AG04450 (cell line): ENCODE measurements at regions of chr18 and their contacts with region 1.

Region 1: GRCh38 chr18:9136315-9137155 is at the start of gene ANKRD12:
- DNase-seq: peak; percentile 94
- H3K4me3 ChIP-seq: peak within 1 kb of the TSS; percentile 80
- H3K27ac ChIP-seq: peak within 1 kb of the TSS; percentile 98
- H3K27me3 ChIP-seq: no peaks in the 10 kb centered on the region
- CTCF ChIP-seq: no peak
- polyA plus RNA-seq, gene ANKRD12: 8.5 and 10.4 TPM in 2 replicates

Region 2: DNA sequence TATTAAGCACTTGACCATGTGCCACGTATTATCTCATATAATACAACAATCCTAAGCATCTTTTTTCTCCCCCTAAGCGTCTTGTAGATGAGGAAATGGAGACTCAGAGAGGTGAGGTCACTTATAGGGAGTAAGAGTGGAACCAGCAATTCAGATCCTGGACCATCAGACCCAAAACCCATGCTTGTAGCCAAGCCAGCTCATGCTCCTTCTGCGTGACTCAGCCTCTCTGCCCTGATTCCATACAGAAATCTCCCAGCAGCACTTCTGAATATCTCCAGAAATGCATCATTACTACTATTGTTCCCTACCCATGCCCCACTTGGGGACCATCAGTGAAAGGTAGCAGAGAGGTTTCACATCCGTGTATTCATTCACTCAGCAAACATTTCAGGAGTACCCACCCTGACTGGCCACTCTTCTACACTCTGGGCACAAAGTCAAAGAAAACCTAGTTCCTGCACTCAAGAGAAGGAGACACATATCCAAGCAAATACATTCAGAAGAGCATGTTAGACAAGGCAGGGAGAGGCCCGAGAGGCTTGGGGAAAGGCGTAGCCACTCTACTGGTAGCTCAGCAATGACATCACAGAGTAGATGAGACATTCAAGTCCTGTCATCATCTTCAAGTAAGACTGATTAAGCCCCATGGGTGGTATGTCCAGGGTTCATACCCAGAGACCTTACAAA is 289.3 kb before region 1 on chr18:
- CTCF ChIA-PET with region 1: no interaction called
- POLR2A ChIA-PET with region 1: no interaction called
- DNase-seq: no peak
- H3K4me3 ChIP-seq: no peak overlapping the region
- H3K27ac ChIP-seq: no peak overlapping the region
- H3K27me3 ChIP-seq: no peaks in the 10 kb centered on the region
- CTCF ChIP-seq: no peak

Region 3: GRCh38 chr18:9102508-9103375 is 33.8 kb before region 1 on chr18 and contains the start of gene NDUFV2:
- CTCF ChIA-PET with region 1: no interaction called
- POLR2A ChIA-PET with region 1: interaction called, 11 read pairs
- DNase-seq: peak; percentile 80
- H3K4me3 ChIP-seq: peak within 1 kb of the TSS; percentile 83
- H3K27ac ChIP-seq: peak within 1 kb of the TSS; percentile 83
- H3K27me3 ChIP-seq: no peaks in the 10 kb centered on the region
- CTCF ChIP-seq: no peak
- polyA plus RNA-seq, gene NDUFV2: 163 and 207 TPM in 2 replicates